ENCODE measurements at regions of chr12 and their contacts with region 1.

Region 1: GRCh38 chr12:98939350-98939749 is 294.3 kb downstream of the APAF1 start:
- DNase-seq: peak; percentile 36
- H3K4me3 ChIP-seq: no peak overlapping the region
- H3K27ac ChIP-seq: no peak overlapping the region
- H3K4me1 ChIP-seq: no peaks in the 10 kb centered on the region
- H3K27me3 ChIP-seq: no peaks in the 10 kb centered on the region
- CTCF ChIP-seq: peak; percentile 23 to 34
- POLR2A ChIP-seq: no peak

Region 2: GRCh38 chr12:98698603-98699463 is 240.5 kb before region 1 on chr12:
- CTCF ChIA-PET with region 1: interaction called, 21 read pairs
- POLR2A ChIA-PET with region 1: no interaction called
- dilution Hi-C with region 1: no loop called
- intact Hi-C with region 1: loop called (anchors 1 kb)
- DNase-seq: peak; percentile 74
- H3K4me3 ChIP-seq: no peak overlapping the region
- H3K27ac ChIP-seq: no peak overlapping the region
- H3K4me1 ChIP-seq: peaks cover 2% of the 10 kb centered on the region
- H3K27me3 ChIP-seq: no peaks in the 10 kb centered on the region
- CTCF ChIP-seq: peak; percentile 44 to 71
- POLR2A ChIP-seq: no peak

Region 3: GRCh38 chr12:98725476-98726247 is 213.7 kb before region 1 on chr12:
- CTCF ChIA-PET with region 1: interaction called, 6 read pairs
- POLR2A ChIA-PET with region 1: no interaction called
- dilution Hi-C with region 1: no loop called
- intact Hi-C with region 1: loop called (anchors 2 kb)
- DNase-seq: peak; percentile 51
- H3K4me3 ChIP-seq: no peak overlapping the region
- H3K27ac ChIP-seq: no peak overlapping the region
- H3K4me1 ChIP-seq: no peaks in the 10 kb centered on the region
- H3K27me3 ChIP-seq: no peaks in the 10 kb centered on the region
- CTCF ChIP-seq: peak; percentile 34 to 53
- POLR2A ChIP-seq: no peak

Region 4: GRCh38 chr12:98863167-98863566 is 76.2 kb before region 1 on chr12:
- CTCF ChIA-PET with region 1: no interaction called
- POLR2A ChIA-PET with region 1: no interaction called
- dilution Hi-C with region 1: no loop called
- intact Hi-C with region 1: no loop called
- DNase-seq: no peak
- H3K4me3 ChIP-seq: no peak overlapping the region
- H3K27ac ChIP-seq: no peak overlapping the region
- H3K4me1 ChIP-seq: no peaks in the 10 kb centered on the region
- H3K27me3 ChIP-seq: peaks cover 0 to 2% of the 10 kb centered on the region in 2 experiments
- CTCF ChIP-seq: no peak
- POLR2A ChIP-seq: no peak